Activated CD8-positive, alpha-beta memory T cell treated with anti-CD3 and anti-CD28 coated beads, Interleukin-2, amount 10 ng/mL, durations not matched to agents 7 days and 5 days (primary cell): ENCODE measurements at regions of chr10 and their contacts with region 1.

Region 1: DNA sequence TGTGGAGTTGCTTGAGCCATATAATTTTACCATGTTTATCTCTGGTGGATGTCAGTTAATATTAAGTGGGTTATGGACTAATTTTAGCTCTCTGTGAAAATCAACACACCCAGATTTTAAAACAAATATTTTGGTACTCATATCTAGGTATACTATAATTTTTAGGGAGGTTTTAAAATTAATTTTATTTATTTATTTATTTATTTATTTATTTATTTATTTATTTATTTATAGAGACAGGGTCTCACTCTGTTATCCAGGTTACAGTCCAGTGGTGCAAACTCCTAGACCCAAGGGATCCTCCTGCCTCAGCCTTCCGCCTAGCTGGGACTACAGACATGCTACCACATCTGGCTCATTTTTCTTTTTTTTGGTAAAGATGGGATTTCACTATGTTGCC is 7.3 kb upstream of the CREM start:
- DNase-seq: no peak
- ATAC-seq: no peak
- H3K4me3 Mint-ChIP-seq: no peak overlapping the region
- H3K27ac Mint-ChIP-seq: no peak overlapping the region
- H3K4me1 Mint-ChIP-seq: peaks cover 13% of the 10 kb centered on the region
- H3K27me3 Mint-ChIP-seq: peaks cover 10% of the 10 kb centered on the region

Region 2: GRCh38 chr10:35040760-35041501 is 78.4 kb before region 1 on chr10:
- CTCF ChIA-PET with region 1: no interaction called
- DNase-seq: no peak
- ATAC-seq: no peak
- H3K4me3 Mint-ChIP-seq: no peak overlapping the region
- H3K27ac Mint-ChIP-seq: no peak overlapping the region
- H3K4me1 Mint-ChIP-seq: peaks cover 4% of the 10 kb centered on the region
- H3K27me3 Mint-ChIP-seq: no peaks in the 10 kb centered on the region

Region 3: DNA sequence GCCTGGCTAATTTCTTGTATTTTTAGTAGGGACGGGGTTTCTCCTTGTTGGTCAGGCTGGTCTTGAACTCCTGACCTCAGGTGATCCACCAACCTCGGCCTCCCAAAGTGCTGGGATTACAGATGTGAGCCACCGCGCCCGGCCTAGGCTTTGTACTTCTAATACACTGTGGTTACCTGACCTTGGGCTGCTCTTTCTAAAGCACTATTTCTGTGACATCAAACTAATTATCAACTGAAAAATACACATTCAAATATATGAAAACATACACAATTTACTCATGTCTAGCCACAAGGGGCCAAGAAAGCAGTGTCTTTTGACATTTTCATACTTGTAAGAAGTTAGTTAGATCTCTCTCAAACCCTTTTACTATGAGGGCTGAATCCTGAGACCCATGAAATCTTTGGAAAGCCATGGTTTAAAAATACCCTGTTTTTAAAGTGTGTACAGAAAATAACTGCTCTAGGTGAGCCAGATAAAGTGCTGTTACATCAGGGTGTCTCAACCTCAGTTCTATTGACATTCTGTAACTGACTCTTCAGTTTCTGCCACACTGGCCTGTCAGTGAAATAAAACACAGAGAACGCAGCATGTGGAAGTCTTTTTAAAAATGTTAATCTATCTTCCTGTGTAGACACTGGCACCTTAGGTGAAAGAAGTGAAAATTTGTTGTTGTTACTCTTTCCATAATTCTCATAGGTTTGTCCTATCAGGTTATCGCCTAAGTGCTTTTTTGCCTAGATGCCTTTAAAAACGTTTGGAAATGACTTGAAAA is 66.1 kb after region 1 on chr10:
- CTCF ChIA-PET with region 1: no interaction called
- DNase-seq: no peak
- ATAC-seq: no peak
- H3K4me3 Mint-ChIP-seq: no peak overlapping the region
- H3K27ac Mint-ChIP-seq: no peak overlapping the region
- H3K4me1 Mint-ChIP-seq: peaks cover 4% of the 10 kb centered on the region
- H3K27me3 Mint-ChIP-seq: no peaks in the 10 kb centered on the region

Region 4: GRCh38 chr10:35208536-35208935 is 89.2 kb after region 1 on chr10:
- CTCF ChIA-PET with region 1: interaction called, 12 read pairs
- DNase-seq: peak; percentile 89
- ATAC-seq: peak; percentile 94
- H3K4me3 Mint-ChIP-seq: peak overlapping the region; percentile 61
- H3K27ac Mint-ChIP-seq: peak overlapping the region; percentile 90
- H3K4me1 Mint-ChIP-seq: peaks cover 62% of the 10 kb centered on the region
- H3K27me3 Mint-ChIP-seq: no peaks in the 10 kb centered on the region

Region 5: GRCh38 chr10:35218339-35218955 is 99.1 kb after region 1 on chr10:
- CTCF ChIA-PET with region 1: interaction called, 111 read pairs
- DNase-seq: peak; percentile 92
- ATAC-seq: peak; percentile 84
- H3K4me3 Mint-ChIP-seq: peak overlapping the region; percentile 46
- H3K27ac Mint-ChIP-seq: peak overlapping the region; percentile 81
- H3K4me1 Mint-ChIP-seq: peaks cover 51% of the 10 kb centered on the region
- H3K27me3 Mint-ChIP-seq: no peaks in the 10 kb centered on the region

Region 6: GRCh38 chr10:35236739-35237138 is 117.4 kb after region 1 on chr10:
- CTCF ChIA-PET with region 1: interaction called, 13 read pairs
- DNase-seq: no peak
- ATAC-seq: no peak
- H3K4me3 Mint-ChIP-seq: no peak overlapping the region
- H3K27ac Mint-ChIP-seq: no peak overlapping the region
- H3K4me1 Mint-ChIP-seq: no peaks in the 10 kb centered on the region
- H3K27me3 Mint-ChIP-seq: no peaks in the 10 kb centered on the region